CD4-positive, alpha-beta T cell (primary cell): ENCODE measurements at regions of chr1 and their contacts with region 1.

Region 1: DNA sequence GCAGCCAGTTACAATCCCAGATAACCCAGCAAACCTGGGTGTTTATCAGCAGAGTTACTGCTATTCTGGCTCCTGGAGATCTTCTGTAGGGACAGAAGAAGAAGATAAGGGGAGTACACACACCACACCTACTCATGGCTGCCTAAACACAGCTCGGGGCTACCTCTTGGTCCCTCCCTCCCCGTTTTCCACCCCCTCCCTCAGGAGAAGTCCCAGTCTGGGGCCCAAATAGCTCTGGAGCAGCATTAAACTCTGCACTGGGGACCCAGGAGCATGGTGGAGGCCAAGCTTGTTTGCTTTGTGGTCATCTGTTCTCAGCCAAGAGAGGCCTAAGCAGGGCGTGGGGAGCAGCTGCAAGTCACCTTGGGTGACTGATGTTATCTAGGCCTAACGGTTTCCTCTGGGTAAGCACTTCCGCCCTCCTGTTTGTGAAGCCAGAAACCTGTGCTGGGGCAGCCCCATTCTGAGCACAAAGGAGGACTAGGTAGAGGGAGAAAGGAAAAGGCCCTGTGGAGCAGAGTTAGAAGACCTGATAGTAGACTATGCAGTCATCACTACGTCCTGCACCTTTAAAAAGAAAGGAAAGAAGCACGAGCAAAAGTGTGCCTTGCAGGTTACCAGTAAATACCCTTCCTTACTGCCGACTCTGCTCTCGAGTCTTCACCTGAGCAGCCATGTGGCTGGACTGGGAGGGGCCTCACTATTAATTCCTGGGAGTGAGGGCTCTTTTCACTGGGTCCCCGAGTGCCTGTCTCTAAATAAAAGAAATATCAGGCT is 2.0 kb upstream of the RCSD1 start:
- DNase-seq: peak; percentile 47 to 92 (median 71)
- ATAC-seq: peak; percentile 78
- H3K4me3 ChIP-seq: peak overlapping the region; percentile 97
- H3K4me3 Mint-ChIP-seq: peak overlapping the region; percentile 94
- H3K27ac ChIP-seq: peak overlapping the region; percentile 71 to 90
- H3K27ac Mint-ChIP-seq: peak overlapping the region; percentile 93
- H3K4me1 ChIP-seq: peaks cover 54% of the 10 kb centered on the region
- H3K4me1 Mint-ChIP-seq: peaks cover 81% of the 10 kb centered on the region
- H3K27me3 ChIP-seq: no peaks in the 10 kb centered on the region
- H3K27me3 Mint-ChIP-seq: no peaks in the 10 kb centered on the region
- CTCF ChIP-seq: no peak

Region 2: DNA sequence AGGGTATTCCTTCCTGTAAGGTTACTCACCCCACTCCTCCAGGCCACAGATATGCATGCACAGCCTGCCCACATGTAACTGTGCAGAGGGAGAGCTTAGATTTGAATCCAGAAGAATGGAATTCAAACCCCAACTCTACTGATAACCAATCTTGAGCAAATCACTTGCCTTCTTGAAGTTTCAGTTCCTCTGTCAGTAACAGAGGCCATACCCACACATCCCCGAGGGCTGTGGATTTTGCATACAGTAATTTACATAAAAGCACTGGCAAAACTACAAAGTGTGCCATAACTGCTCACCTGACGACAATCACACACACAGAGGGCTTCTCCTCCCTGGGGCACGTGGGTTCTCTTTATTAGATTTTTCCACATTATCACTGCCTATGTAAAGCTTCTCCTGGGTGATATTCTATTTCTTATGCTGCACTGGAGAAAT is 128.4 kb before region 1 on chr1:
- CTCF ChIA-PET with region 1: no interaction called
- POLR2A ChIA-PET with region 1: no interaction called
- intact Hi-C with region 1: no loop called
- DNase-seq: peak in 4 of 14 experiments; percentile 34 to 70 (median 52)
- ATAC-seq: peak; percentile 68
- H3K4me3 ChIP-seq: no peak overlapping the region
- H3K4me3 Mint-ChIP-seq: peak overlapping the region; percentile 47
- H3K27ac ChIP-seq: peak overlapping the region; percentile 26 to 29
- H3K27ac Mint-ChIP-seq: peak overlapping the region; percentile 100
- H3K4me1 ChIP-seq: peaks cover 96% of the 10 kb centered on the region
- H3K4me1 Mint-ChIP-seq: peaks cover 99% of the 10 kb centered on the region
- H3K27me3 ChIP-seq: no peaks in the 10 kb centered on the region
- H3K27me3 Mint-ChIP-seq: no peaks in the 10 kb centered on the region
- CTCF ChIP-seq: no peak

Region 3: DNA sequence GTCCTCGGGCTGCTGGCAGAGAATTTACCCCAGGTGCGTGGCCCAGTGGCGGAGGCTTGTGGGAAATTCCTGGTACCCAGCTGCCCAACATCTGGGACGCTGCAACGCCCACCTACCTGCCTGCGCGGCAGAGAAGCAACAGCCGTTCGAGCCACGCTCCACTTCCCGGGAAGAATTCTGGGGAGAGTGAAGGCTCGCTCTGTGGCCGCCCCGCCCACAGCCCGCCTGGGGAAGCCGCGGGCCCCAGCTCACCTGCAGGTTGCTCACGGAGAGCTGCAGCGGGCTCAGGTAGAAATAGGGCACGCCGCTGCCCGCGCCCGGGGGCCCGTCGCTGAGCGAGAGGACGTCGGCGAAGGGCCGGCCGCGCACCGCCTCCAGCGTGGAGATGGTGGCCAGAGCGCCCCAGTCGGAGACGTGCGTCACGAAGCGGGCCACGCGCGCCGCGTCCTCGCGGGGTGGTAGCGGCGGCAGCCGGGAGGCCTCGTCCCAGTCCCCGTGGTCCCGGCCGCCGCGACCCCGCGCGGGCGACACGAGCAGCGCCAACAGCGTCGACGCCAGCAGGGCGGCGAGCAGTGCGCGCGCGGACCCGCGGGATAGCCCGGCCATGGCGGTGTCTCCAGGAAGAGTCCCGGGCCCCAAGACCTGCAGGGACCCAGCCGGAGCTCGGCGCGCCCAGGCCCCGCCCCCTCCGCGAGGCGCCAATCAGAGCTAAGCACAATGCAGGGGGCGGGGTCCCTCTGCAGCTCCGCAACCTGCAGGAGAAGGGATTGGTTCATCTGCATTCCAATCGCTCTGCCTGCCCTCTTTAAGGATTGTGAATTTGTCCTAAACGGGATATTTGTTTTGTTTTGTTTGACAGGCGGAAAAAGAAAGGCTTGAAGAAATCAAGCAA is 74.7 kb before region 1 on chr1 and contains the start of gene CREG1:
- CTCF ChIA-PET with region 1: no interaction called
- POLR2A ChIA-PET with region 1: interaction called, 14 read pairs
- intact Hi-C with region 1: loop called in 1 of 2 experiments (anchors 10 kb)
- DNase-seq: peak; percentile 76 to 95 (median 86)
- ATAC-seq: peak; percentile 97
- H3K4me3 ChIP-seq: peak within 1 kb of the TSS; percentile 75
- H3K4me3 Mint-ChIP-seq: peak within 1 kb of the TSS; percentile 96
- H3K27ac ChIP-seq: peak within 1 kb of the TSS in 1 of 2 donors; percentile 25
- H3K27ac Mint-ChIP-seq: peak within 1 kb of the TSS; percentile 81
- H3K4me1 ChIP-seq: peaks cover 25% of the 10 kb centered on the region
- H3K4me1 Mint-ChIP-seq: peaks cover 42% of the 10 kb centered on the region
- H3K27me3 ChIP-seq: no peaks in the 10 kb centered on the region
- H3K27me3 Mint-ChIP-seq: no peaks in the 10 kb centered on the region
- CTCF ChIP-seq: no peak
- total RNA-seq, gene CREG1: 10.7 to 11.2 TPM

Region 4: GRCh38 chr1:167565922-167566321 is 62.1 kb before region 1 on chr1:
- CTCF ChIA-PET with region 1: no interaction called
- POLR2A ChIA-PET with region 1: no interaction called
- intact Hi-C with region 1: no loop called
- DNase-seq: no peak
- ATAC-seq: no peak
- H3K4me3 ChIP-seq: no peak overlapping the region
- H3K4me3 Mint-ChIP-seq: no peak overlapping the region
- H3K27ac ChIP-seq: no peak overlapping the region
- H3K27ac Mint-ChIP-seq: no peak overlapping the region
- H3K4me1 ChIP-seq: no peaks in the 10 kb centered on the region
- H3K4me1 Mint-ChIP-seq: no peaks in the 10 kb centered on the region
- H3K27me3 ChIP-seq: no peaks in the 10 kb centered on the region
- H3K27me3 Mint-ChIP-seq: no peaks in the 10 kb centered on the region
- CTCF ChIP-seq: no peak

Region 5: GRCh38 chr1:167617153-167618147 is 10.6 kb before region 1 on chr1:
- CTCF ChIA-PET with region 1: interaction called, 5 read pairs
- POLR2A ChIA-PET with region 1: interaction called, 104 read pairs
- intact Hi-C with region 1: loop called in 1 of 2 experiments (anchors 2 kb)
- DNase-seq: peak in 5 of 14 experiments; percentile 19 to 68 (median 49)
- ATAC-seq: peak; percentile 46
- H3K4me3 ChIP-seq: peak overlapping the region; percentile 24
- H3K4me3 Mint-ChIP-seq: peak overlapping the region; percentile 69
- H3K27ac ChIP-seq: peak overlapping the region; percentile 42 to 47
- H3K27ac Mint-ChIP-seq: peak overlapping the region; percentile 62
- H3K4me1 ChIP-seq: peaks cover 54% of the 10 kb centered on the region
- H3K4me1 Mint-ChIP-seq: peaks cover 58% of the 10 kb centered on the region
- H3K27me3 ChIP-seq: no peaks in the 10 kb centered on the region
- H3K27me3 Mint-ChIP-seq: no peaks in the 10 kb centered on the region
- CTCF ChIP-seq: no peak

Region 6: GRCh38 chr1:167687919-167688519 is 60.0 kb after region 1 on chr1:
- CTCF ChIA-PET with region 1: interaction called, 14 read pairs
- POLR2A ChIA-PET with region 1: interaction called, 4 read pairs
- intact Hi-C with region 1: no loop called
- DNase-seq: peak; percentile 40 to 89 (median 74)
- ATAC-seq: peak; percentile 85
- H3K4me3 ChIP-seq: no peak overlapping the region
- H3K4me3 Mint-ChIP-seq: no peak overlapping the region
- H3K27ac ChIP-seq: no peak overlapping the region
- H3K27ac Mint-ChIP-seq: peak overlapping the region; percentile 21
- H3K4me1 ChIP-seq: peaks cover 16% of the 10 kb centered on the region
- H3K4me1 Mint-ChIP-seq: peaks cover 11% of the 10 kb centered on the region
- H3K27me3 ChIP-seq: no peaks in the 10 kb centered on the region
- H3K27me3 Mint-ChIP-seq: no peaks in the 10 kb centered on the region
- CTCF ChIP-seq: peak; percentile 92

Region 7: DNA sequence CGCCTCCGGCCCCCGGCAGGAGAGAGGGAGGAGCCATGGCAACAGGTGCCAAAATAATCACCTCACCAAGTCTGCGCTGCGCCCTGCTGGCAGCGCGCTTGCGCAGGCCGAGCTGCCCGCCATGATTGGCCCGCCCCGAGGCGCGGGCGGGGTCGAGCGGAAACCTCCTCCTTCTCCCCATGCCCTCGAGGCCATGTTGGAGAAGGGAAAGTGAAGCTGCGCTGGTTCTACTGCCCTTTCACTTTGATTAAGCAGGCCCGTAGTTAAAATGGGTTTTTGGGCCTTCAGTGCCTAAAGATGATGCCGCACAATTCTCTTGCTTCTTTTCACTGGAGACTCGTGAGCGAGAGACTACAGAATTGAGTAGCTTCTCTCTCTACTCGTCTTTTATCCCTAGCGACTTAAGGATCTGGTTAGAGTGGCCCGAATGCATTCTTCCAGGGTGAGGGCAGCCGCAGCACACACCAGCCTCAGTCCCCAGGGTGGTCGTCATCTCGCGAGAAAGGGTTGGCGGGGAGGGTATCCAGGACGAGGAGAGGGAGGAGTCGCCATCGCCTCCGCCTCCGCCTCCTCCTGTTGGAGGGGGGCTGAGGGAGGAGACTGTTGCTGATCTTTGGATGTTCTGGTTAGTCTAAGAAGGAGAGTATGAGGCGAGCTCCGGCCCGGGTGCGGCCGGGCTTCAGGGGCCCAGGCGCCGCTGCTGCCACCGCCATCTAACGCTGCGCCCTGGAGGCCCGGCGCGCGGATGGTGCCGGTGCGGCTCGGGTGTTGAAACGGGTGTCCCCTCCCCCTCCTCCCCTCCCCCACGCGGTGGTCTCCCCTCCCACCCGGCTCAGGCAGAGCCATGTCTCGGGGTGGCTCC is 308.2 kb after region 1 on chr1 and contains the start of gene DCAF6:
- CTCF ChIA-PET with region 1: no interaction called
- POLR2A ChIA-PET with region 1: interaction called, 4 read pairs
- intact Hi-C with region 1: loop called in 1 of 2 experiments (anchors 5 kb)
- DNase-seq: peak; percentile 93 to 100 (median 96)
- ATAC-seq: peak; percentile 81
- H3K4me3 ChIP-seq: peak within 1 kb of the TSS; percentile 95
- H3K4me3 Mint-ChIP-seq: peak within 1 kb of the TSS; percentile 94
- H3K27ac ChIP-seq: peak within 1 kb of the TSS; percentile 77 to 96
- H3K27ac Mint-ChIP-seq: peak within 1 kb of the TSS; percentile 99
- H3K4me1 ChIP-seq: peaks cover 5% of the 10 kb centered on the region
- H3K4me1 Mint-ChIP-seq: peaks cover 62% of the 10 kb centered on the region
- H3K27me3 ChIP-seq: no peaks in the 10 kb centered on the region
- H3K27me3 Mint-ChIP-seq: no peaks in the 10 kb centered on the region
- CTCF ChIP-seq: no peak
- total RNA-seq, gene DCAF6: 13.3 to 13.6 TPM

Region 8: DNA sequence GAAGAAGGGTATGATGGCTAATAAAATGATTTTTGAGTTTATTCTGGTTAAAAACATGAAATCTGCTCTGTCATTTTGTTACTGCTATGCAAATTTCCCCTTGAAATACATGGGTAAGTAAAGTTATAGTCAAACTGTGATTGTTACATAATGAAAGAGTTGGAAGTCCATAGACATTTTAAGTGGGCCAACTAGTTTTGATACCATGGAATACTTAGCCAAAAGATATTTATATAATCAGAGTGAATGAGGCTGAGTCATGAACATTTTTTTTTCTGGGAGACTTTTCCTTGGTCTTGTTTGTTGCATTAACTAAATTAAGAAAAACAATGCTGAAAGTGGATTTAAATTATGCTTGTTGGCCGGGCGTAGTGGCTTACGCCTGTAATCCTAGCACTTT is 367.0 kb after region 1 on chr1:
- CTCF ChIA-PET with region 1: no interaction called
- POLR2A ChIA-PET with region 1: no interaction called
- intact Hi-C with region 1: no loop called
- DNase-seq: no peak
- ATAC-seq: no peak
- H3K4me3 ChIP-seq: no peak overlapping the region
- H3K4me3 Mint-ChIP-seq: no peak overlapping the region
- H3K27ac ChIP-seq: no peak overlapping the region
- H3K27ac Mint-ChIP-seq: no peak overlapping the region
- H3K4me1 ChIP-seq: no peaks in the 10 kb centered on the region
- H3K4me1 Mint-ChIP-seq: peaks cover 6% of the 10 kb centered on the region
- H3K27me3 ChIP-seq: no peaks in the 10 kb centered on the region
- H3K27me3 Mint-ChIP-seq: no peaks in the 10 kb centered on the region
- CTCF ChIP-seq: no peak